Naive thymus-derived CD4-positive, alpha-beta T cell (primary cell): ENCODE measurements at regions of chr16 and their contacts with region 1.

Region 1: DNA sequence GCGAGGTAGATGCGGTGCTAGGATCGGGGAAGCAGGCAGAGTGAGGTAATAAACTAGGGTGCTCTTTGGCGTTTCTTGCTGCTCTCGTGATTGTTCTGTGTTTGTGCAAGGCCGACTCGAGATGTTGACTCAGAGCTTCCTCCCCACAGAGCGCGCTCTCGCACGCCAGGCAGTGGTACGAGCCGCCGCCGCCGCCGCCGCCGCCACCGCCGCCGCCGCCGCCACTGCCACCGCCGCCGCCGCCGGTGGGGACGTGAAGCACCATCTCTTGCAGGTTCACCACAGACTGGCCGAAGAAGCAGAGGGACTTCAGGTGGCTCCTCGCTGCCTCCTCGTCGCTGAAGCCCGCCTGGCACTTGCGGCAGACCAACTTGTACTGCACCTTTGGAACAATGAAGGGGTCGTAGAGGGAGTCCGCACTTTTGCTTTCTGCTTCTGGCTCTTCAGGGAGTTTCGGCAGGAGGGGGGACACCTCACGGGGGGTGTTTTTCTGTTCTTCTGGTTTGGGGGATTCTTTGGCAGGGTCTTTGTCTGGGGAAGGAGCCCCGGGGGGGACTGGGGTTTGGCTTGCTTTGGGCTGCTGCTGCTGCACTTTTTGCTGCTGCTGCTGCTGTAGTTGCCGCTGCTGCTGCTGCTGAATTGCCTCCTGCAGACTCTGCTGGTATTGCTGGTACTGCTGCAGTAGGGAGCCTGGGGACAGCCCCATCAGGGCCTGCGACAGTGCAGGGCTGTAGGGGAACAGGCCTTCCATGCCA is 260.2 kb downstream of the ZFHX3 start:
- DNase-seq: peak; percentile 19 to 68 (median 46)
- ATAC-seq: peak; percentile 86
- H3K4me3 ChIP-seq: peak overlapping the region; percentile 58
- H3K4me3 Mint-ChIP-seq: peak overlapping the region; percentile 85 to 92 (median 88)
- H3K27ac ChIP-seq: no peak overlapping the region
- H3K27ac Mint-ChIP-seq: peak overlapping the region in 8 of 9 donors; percentile 28 to 79 (median 68)
- H3K4me1 ChIP-seq: no peaks in the 10 kb centered on the region
- H3K4me1 Mint-ChIP-seq: peaks cover 9 to 32% (median 14%) of the 10 kb centered on the region in 7 donors
- H3K27me3 ChIP-seq: peaks cover 0 to 11% of the 10 kb centered on the region in 2 donors
- H3K27me3 Mint-ChIP-seq: peaks cover 11 to 50% (median 32%) of the 10 kb centered on the region in 5 donors

Region 2: GRCh38 chr16:73047518-73048291 is 260.0 kb after region 1 on chr16 and contains the start of gene ZFHX3:
- CTCF ChIA-PET with region 1: no interaction called
- POLR2A ChIA-PET with region 1: no interaction called
- intact Hi-C with region 1: loop called in 1 of 2 experiments (anchors 5 kb)
- DNase-seq: peak in 6 of 9 donors; percentile 19 to 48 (median 34)
- ATAC-seq: peak; percentile 83
- H3K4me3 ChIP-seq: no peak within 1 kb of the TSS
- H3K4me3 Mint-ChIP-seq: peak within 1 kb of the TSS in 8 of 10 donors; percentile 39 to 81 (median 66)
- H3K27ac ChIP-seq: no peak within 1 kb of the TSS
- H3K27ac Mint-ChIP-seq: peak within 1 kb of the TSS in 2 of 9 donors; percentile 31 to 54
- H3K4me1 ChIP-seq: no peaks in the 10 kb centered on the region
- H3K4me1 Mint-ChIP-seq: peaks cover 0 to 14% (median 6%) of the 10 kb centered on the region in 7 donors
- H3K27me3 ChIP-seq: peaks cover 3 to 4% of the 10 kb centered on the region in 2 donors
- H3K27me3 Mint-ChIP-seq: peaks cover 9 to 47% (median 27%) of the 10 kb centered on the region in 5 donors
- total RNA-seq, gene ZFHX3: 1.5 to 9.8 (median 2.2) TPM